ENCODE measurements at regions of chr11 and their contacts with region 1.

Region 1: GRCh38 chr11:117072517-117073461 is 25.4 kb downstream of the SIK3 start:
- DNase-seq: peak in 1 of 2 experiments; percentile 78
- H3K4me3 ChIP-seq: no peak overlapping the region
- H3K4me3 Mint-ChIP-seq: no peak overlapping the region
- H3K27ac Mint-ChIP-seq: peak overlapping the region; percentile 28
- H3K4me1 ChIP-seq: peaks cover 68% of the 10 kb centered on the region
- H3K4me1 Mint-ChIP-seq: peaks cover 57% of the 10 kb centered on the region
- H3K27me3 ChIP-seq: no peaks in the 10 kb centered on the region
- H3K27me3 Mint-ChIP-seq: no peaks in the 10 kb centered on the region
- CTCF ChIP-seq: no peak

Region 2: GRCh38 chr11:117020869-117021564 is 51.8 kb before region 1 on chr11:
- CTCF ChIA-PET with region 1: no interaction called
- POLR2A ChIA-PET with region 1: interaction called, 3 read pairs
- intact Hi-C with region 1: loop called (anchors 1 kb)
- DNase-seq: peak; percentile 58 to 62
- H3K4me3 ChIP-seq: peak overlapping the region; percentile 2; the same call in 1 of the 2 replicates
- H3K4me3 Mint-ChIP-seq: peak overlapping the region; percentile 70
- H3K27ac Mint-ChIP-seq: peak overlapping the region; percentile 92
- H3K4me1 ChIP-seq: peaks cover 63% of the 10 kb centered on the region
- H3K4me1 Mint-ChIP-seq: peaks cover 57% of the 10 kb centered on the region
- H3K27me3 ChIP-seq: no peaks in the 10 kb centered on the region
- H3K27me3 Mint-ChIP-seq: no peaks in the 10 kb centered on the region
- CTCF ChIP-seq: no peak

Region 3: GRCh38 chr11:117087446-117087845 is 14.7 kb after region 1 on chr11:
- CTCF ChIA-PET with region 1: interaction called, 3 read pairs
- POLR2A ChIA-PET with region 1: interaction called, 3 read pairs
- intact Hi-C with region 1: loop called (anchors 1 kb)
- DNase-seq: peak; percentile 43 to 74
- H3K4me3 ChIP-seq: no peak overlapping the region
- H3K4me3 Mint-ChIP-seq: peak overlapping the region; percentile 4
- H3K27ac Mint-ChIP-seq: peak overlapping the region; percentile 12
- H3K4me1 ChIP-seq: peaks cover 79% of the 10 kb centered on the region
- H3K4me1 Mint-ChIP-seq: peaks cover 54% of the 10 kb centered on the region
- H3K27me3 ChIP-seq: no peaks in the 10 kb centered on the region
- H3K27me3 Mint-ChIP-seq: no peaks in the 10 kb centered on the region
- CTCF ChIP-seq: no peak

Region 4: GRCh38 chr11:117092951-117093590 is 20.3 kb after region 1 on chr11:
- CTCF ChIA-PET with region 1: interaction called, 18 read pairs
- POLR2A ChIA-PET with region 1: interaction called, 23 read pairs
- intact Hi-C with region 1: loop called (anchors 1 kb)
- DNase-seq: no peak
- H3K4me3 ChIP-seq: no peak overlapping the region
- H3K4me3 Mint-ChIP-seq: no peak overlapping the region
- H3K27ac Mint-ChIP-seq: peak overlapping the region; percentile 6
- H3K4me1 ChIP-seq: peaks cover 76% of the 10 kb centered on the region
- H3K4me1 Mint-ChIP-seq: peaks cover 66% of the 10 kb centered on the region
- H3K27me3 ChIP-seq: no peaks in the 10 kb centered on the region
- H3K27me3 Mint-ChIP-seq: no peaks in the 10 kb centered on the region
- CTCF ChIP-seq: no peak